ENCODE measurements at regions of chr5 and their contacts with region 1.

Region 1: GRCh38 chr5:14628346-14628745 is 36.2 kb upstream of the OTULIN start:
- DNase-seq: no peak
- ATAC-seq: no peak
- H3K4me3 ChIP-seq: no peak overlapping the region
- H3K27ac ChIP-seq: no peak overlapping the region
- H3K4me1 ChIP-seq: no peaks in the 10 kb centered on the region
- H3K27me3 ChIP-seq: peaks cover 4% of the 10 kb centered on the region; the same call in 1 of the 2 replicates
- CTCF ChIP-seq: no peak

Region 2: GRCh38 chr5:14659821-14660607 is 31.7 kb after region 1 on chr5:
- CTCF ChIA-PET with region 1: no interaction called
- POLR2A ChIA-PET with region 1: interaction called, 15 read pairs
- in situ Hi-C with region 1: no loop called
- intact Hi-C with region 1: no loop called
- DNase-seq: no peak
- ATAC-seq: no peak
- H3K4me3 ChIP-seq: no peak overlapping the region
- H3K27ac ChIP-seq: no peak overlapping the region
- H3K4me1 ChIP-seq: no peaks in the 10 kb centered on the region
- H3K27me3 ChIP-seq: no peaks in the 10 kb centered on the region
- CTCF ChIP-seq: no peak